ENCODE measurements at regions of chr3 and their contacts with region 1.

Region 1: DNA sequence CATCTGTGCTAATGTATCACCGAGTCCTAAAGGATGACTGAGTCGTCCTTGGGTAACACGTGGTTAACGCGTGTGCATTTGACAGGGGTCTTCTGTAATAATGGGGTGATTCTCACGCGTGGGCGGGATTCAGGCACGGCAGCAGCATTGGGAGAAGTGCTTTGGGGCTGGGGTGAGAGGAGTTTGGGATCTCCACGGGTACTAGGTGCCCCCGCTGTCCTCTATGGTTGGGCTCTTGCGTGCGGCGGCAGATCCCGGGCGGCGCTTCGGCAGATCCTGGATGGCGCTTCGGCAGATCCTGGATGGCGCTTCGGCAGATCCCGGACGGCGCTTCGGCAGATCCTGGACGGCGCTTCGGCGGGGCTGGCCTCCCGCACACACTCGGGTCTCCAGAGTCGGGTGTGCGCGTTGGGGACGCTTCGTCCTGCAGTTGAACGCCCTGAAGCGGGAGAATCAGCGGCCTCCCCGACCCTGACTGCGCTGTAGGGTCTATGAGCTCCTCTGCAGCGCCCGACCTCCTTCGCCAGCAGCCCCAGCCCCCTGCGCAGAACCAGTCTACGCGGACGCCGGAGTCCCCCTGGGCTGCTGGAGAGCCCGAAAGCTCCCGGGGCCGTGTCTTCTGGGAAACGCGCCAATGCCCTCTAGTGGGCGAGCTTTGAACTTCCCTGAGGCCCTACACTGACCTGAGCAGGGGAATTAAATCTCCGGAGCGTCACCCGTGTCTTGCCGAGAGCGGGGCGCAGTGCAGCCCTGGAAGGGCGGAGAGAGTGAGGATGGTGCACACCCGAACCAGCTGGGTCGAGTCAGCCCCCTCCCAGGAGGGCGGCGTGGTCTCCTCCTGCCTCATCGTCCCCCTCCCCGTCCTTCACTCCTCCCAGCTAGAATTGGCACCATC is 48.1 kb upstream of the EPHB3 start:
- DNase-seq: peak; percentile 87
- ATAC-seq: peak; percentile 99
- H3K4me3 Mint-ChIP-seq: peak overlapping the region; percentile 19
- H3K27ac Mint-ChIP-seq: no peak overlapping the region
- H3K4me1 Mint-ChIP-seq: peaks cover 10% of the 10 kb centered on the region
- H3K27me3 Mint-ChIP-seq: peaks cover 74% of the 10 kb centered on the region

Region 2: DNA sequence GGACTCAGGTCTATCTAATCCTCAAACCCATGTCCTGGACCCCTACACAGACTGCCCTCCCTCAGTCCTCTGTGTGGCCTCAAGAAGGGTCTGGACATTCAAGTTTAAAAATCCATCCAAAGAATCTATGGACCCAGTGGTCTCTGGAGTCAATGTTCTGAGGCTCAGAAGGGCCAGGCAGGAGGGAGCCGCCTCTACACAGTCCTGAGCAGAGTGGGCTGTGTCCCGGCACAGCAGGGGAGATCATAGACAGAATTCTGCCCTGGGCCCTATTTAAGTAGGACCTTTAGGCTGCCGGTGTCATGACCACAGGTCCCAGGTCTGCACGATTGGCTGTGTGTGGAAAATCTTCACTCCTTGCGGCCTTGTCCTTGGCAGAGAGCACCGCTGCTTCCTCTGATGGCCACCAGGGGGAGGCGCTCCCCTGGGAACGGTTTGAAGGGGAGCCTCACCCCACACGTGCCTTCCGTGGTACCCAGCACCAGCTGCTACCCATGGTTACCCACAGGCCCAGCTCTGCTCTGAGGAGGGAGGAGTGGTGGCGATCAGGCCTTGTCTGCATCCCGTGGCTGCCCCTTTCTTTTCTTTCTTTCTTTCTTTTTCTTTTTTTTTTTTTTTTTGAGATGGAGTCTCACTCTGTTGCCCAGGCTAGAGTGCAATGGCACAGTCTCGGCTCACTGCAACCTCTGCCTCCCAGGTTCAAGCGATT is 95.8 kb before region 1 on chr3:
- CTCF ChIA-PET with region 1: interaction called, 50 read pairs
- DNase-seq: peak; percentile 72
- ATAC-seq: peak; percentile 96
- H3K4me3 Mint-ChIP-seq: no peak overlapping the region
- H3K27ac Mint-ChIP-seq: no peak overlapping the region
- H3K4me1 Mint-ChIP-seq: peaks cover 2% of the 10 kb centered on the region
- H3K27me3 Mint-ChIP-seq: peaks cover 6% of the 10 kb centered on the region

Region 3: DNA sequence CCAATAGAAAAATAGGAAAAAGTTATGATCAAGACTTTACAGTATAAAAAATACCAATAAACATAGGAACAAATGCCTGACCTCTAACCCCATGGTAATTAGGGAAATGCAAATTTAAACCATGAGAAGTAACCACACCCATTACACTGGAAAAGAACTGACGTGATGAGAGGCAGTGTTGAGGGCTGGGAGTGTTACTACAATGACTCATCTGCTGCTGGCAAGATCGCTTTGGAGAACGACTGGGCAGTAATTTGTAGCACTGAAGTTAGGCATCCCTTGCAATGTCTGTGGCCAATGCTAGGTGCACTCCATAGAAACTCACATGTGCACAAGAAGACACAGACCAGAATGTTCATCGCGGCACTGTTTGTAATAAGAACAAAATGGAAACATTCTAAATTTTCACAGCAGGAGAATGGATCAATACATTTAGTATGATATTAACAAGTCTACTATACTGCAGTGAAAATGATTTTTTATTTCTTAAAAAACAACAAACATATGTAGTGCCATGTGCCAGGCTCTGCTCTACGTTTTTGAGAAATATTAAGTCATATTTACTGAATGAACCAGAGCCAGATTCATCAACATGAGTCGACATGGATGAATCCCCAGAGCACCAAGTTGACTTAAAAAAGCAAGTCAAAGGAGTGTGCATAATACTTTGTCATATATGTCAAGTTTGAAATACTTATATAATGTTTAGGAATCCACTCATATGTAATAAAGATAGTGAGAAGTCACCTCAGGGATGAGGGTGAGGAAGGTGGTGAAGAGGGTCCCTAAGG is 10.5 kb after region 1 on chr3:
- CTCF ChIA-PET with region 1: interaction called, 65 read pairs
- DNase-seq: no peak
- ATAC-seq: peak; percentile 65
- H3K4me3 Mint-ChIP-seq: peak overlapping the region; percentile 25
- H3K27ac Mint-ChIP-seq: no peak overlapping the region
- H3K4me1 Mint-ChIP-seq: peaks cover 15% of the 10 kb centered on the region
- H3K27me3 Mint-ChIP-seq: peaks cover 65% of the 10 kb centered on the region